Naive thymus-derived CD4-positive, alpha-beta T cell (primary cell): ENCODE measurements at regions of chr20 and their contacts with region 1.

Region 1: GRCh38 chr20:32945710-32946221 is 58.5 kb downstream of the SUN5 start:
- DNase-seq: peak in 7 of 9 donors; percentile 22 to 67 (median 57)
- ATAC-seq: peak; percentile 93
- H3K4me3 ChIP-seq: peak overlapping the region; percentile 25
- H3K4me3 Mint-ChIP-seq: peak overlapping the region; percentile 34 to 85 (median 68)
- H3K27ac ChIP-seq: peak overlapping the region; percentile 57
- H3K27ac Mint-ChIP-seq: peak overlapping the region; percentile 79 to 96 (median 88)
- H3K4me1 ChIP-seq: peaks cover 8 to 33% of the 10 kb centered on the region in 2 donors
- H3K4me1 Mint-ChIP-seq: peaks cover 30 to 53% (median 48%) of the 10 kb centered on the region in 7 donors
- H3K27me3 ChIP-seq: no peaks in the 10 kb centered on the region
- H3K27me3 Mint-ChIP-seq: no peaks in the 10 kb centered on the region

Region 2: DNA sequence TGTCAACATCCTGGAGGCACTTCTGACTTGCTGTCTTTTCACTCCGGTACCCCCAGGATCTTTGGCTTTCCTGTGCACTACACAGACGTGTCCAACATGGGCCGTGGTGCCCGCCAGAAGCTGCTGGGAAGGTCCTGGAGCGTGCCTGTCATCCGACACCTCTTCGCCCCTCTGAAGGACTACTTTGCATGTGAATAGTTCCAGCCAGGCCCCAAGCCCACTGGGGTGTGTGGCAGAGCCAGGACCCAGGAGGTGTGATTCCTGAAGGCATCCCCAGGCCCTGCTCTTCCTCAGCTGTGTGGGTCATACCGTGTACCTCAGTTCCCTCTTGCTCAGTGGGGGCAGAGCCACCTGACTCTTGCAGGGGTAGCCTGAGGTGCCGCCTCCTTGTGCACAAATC is 138.1 kb before region 1 on chr20:
- CTCF ChIA-PET with region 1: no interaction called
- POLR2A ChIA-PET with region 1: no interaction called
- intact Hi-C with region 1: no loop called
- DNase-seq: no peak
- ATAC-seq: no peak
- H3K4me3 ChIP-seq: no peak overlapping the region
- H3K4me3 Mint-ChIP-seq: no peak overlapping the region
- H3K27ac ChIP-seq: no peak overlapping the region
- H3K27ac Mint-ChIP-seq: peak overlapping the region in 1 of 9 donors; percentile 17
- H3K4me1 ChIP-seq: no peaks in the 10 kb centered on the region
- H3K4me1 Mint-ChIP-seq: no peaks in the 10 kb centered on the region
- H3K27me3 ChIP-seq: no peaks in the 10 kb centered on the region
- H3K27me3 Mint-ChIP-seq: no peaks in the 10 kb centered on the region

Region 3: DNA sequence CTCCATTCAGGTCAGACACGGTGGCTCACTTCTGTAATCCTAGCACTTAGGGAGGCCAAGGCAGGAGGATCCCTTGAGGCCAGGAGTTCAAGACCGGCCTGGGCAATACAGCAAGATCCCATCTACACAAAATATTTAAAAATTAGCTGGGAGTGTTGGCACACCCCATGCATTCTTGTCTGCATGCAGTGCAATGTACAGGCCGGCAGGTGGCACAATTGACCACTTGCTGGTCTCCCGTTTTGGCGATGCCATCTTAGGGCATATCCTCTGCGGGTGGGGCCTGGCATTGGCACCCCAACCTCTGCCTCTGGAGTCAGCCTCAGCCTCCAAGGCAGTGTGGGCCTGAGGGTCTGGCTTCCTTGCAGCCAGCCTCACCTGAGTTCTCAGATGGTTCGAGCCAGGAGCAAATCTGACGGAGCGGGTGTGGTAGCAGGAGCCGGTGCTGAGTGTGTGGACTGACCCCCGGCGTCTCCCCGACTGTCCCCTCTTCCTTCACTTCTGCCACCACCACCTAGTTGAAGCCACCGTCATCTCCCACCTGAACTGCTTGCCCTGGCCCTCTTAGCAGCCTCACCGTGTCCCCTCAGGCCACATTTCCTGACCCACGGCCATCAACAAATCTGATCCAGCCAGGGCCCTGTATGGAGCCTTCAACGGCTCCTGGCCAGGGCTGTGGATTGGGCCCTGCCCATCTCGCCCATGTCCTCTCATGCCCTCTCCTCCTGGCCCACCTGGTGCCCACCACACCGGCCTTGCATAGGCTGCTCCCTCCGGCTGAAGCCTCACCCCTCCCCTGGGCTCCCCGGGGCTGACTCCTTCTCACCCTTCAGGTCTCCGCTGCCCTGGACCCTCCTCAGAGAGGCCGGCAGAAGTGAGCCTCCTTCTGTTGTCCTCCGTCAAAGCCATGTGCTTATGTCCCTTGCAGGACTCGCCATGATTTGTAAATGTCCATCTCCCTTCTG is 43.0 kb before region 1 on chr20:
- CTCF ChIA-PET with region 1: interaction called, 11 read pairs
- POLR2A ChIA-PET with region 1: no interaction called
- intact Hi-C with region 1: loop called (anchors 1 kb)
- DNase-seq: peak; percentile 42 to 76 (median 65)
- ATAC-seq: peak; percentile 89
- H3K4me3 ChIP-seq: no peak overlapping the region
- H3K4me3 Mint-ChIP-seq: peak overlapping the region in 6 of 10 donors; percentile 23 to 68 (median 46)
- H3K27ac ChIP-seq: no peak overlapping the region
- H3K27ac Mint-ChIP-seq: peak overlapping the region in 7 of 9 donors; percentile 43 to 86 (median 75)
- H3K4me1 ChIP-seq: peaks cover 0 to 34% of the 10 kb centered on the region in 2 donors
- H3K4me1 Mint-ChIP-seq: peaks cover 12 to 56% (median 37%) of the 10 kb centered on the region in 7 donors
- H3K27me3 ChIP-seq: no peaks in the 10 kb centered on the region
- H3K27me3 Mint-ChIP-seq: no peaks in the 10 kb centered on the region

Region 4: DNA sequence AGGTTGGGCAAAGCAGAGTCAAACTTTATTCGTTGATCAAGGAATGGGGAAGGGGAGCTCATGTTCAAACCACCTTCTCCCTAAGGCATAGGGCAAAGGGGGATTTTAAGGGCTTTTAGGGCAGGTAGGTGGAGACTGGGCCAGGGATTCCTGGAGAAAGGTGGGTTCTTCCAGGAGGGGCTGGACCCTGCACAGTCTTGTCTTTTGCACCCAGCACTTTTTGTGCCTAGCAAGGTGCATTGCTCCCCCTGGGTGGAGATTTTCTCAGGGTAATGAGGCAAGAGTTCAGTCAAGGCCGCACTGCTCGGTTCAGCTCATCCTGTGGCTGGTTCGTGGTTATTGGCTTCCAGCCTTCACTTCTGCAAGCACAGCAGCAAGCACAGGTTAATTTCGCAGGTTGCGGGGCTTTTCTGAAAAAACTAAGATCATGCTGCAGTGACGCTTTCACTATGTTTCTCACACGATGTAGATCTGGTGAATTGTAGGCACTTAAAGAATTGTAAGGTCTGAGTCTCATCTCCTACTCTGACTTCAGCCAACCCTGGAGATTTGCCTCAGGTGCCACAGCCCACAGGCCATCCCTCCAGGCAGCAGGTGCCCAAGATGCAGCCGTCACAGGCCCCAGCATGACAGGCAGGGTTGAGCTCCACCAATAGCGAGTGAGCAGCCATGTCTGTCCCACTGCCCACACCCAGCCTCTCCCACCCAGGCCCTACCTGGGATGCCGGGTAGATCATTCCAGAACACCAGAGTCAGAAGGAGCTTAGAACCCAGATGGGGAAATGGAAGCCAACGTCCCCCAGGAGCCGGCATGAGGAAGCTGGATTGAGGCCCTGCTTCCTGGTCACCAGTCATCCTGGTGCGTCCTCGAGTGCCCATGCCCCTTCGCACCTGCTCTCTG is 21.4 kb after region 1 on chr20:
- CTCF ChIA-PET with region 1: interaction called, 25 read pairs
- POLR2A ChIA-PET with region 1: interaction called, 40 read pairs
- intact Hi-C with region 1: loop called in 1 of 2 experiments (anchors 1 kb)
- DNase-seq: peak in 7 of 9 donors; percentile 58 to 81 (median 73)
- ATAC-seq: peak; percentile 68
- H3K4me3 ChIP-seq: peak overlapping the region; percentile 46
- H3K4me3 Mint-ChIP-seq: peak overlapping the region in 7 of 10 donors; percentile 50 to 82 (median 74)
- H3K27ac ChIP-seq: peak overlapping the region; percentile 85
- H3K27ac Mint-ChIP-seq: peak overlapping the region in 3 of 9 donors; percentile 90 to 98 (median 94)
- H3K4me1 ChIP-seq: peaks cover 72 to 86% of the 10 kb centered on the region in 2 donors
- H3K4me1 Mint-ChIP-seq: peaks cover 20 to 87% (median 64%) of the 10 kb centered on the region in 7 donors
- H3K27me3 ChIP-seq: no peaks in the 10 kb centered on the region
- H3K27me3 Mint-ChIP-seq: no peaks in the 10 kb centered on the region

Region 5: DNA sequence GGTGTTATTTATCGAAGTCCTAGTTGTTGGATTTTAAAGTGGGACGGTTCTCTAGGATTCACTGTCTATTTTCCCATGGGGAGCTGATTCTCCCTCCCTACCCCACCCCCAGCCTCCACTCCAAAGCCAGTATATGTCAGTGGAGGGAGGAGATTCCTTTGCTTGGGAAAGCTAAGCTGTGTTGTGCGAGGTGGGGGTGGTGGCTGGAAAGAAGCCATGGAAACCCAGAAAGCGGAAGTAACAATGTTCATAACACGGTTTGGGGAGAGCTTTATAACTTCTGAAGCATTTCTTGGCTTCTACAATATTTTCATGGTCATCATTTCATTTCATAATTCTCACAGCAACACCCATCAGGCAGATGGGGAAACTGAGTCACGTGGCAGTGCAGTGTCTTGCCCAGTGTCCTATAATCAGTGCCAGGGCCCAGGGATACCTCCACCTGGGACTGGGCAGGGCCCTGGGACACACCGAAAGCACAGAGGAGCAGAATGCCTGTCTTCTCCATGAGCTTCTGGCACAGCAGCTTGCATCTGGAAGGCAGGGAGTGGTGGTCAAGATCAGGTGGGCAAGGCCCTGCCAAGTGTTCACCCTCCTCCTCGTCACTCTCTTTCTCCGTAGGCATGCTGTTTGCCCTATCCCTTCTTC is 54.0 kb after region 1 on chr20:
- CTCF ChIA-PET with region 1: interaction called, 3 read pairs
- POLR2A ChIA-PET with region 1: interaction called, 3 read pairs
- intact Hi-C with region 1: loop called in 1 of 2 experiments (anchors 10 kb)
- DNase-seq: no peak
- ATAC-seq: no peak
- H3K4me3 ChIP-seq: no peak overlapping the region
- H3K4me3 Mint-ChIP-seq: peak overlapping the region in 4 of 10 donors; percentile 10 to 39 (median 28)
- H3K27ac ChIP-seq: no peak overlapping the region
- H3K27ac Mint-ChIP-seq: peak overlapping the region in 6 of 9 donors; percentile 5 to 56 (median 35)
- H3K4me1 ChIP-seq: peaks cover 0 to 19% of the 10 kb centered on the region in 2 donors
- H3K4me1 Mint-ChIP-seq: peaks cover 9 to 64% (median 54%) of the 10 kb centered on the region in 7 donors
- H3K27me3 ChIP-seq: no peaks in the 10 kb centered on the region
- H3K27me3 Mint-ChIP-seq: no peaks in the 10 kb centered on the region

Region 6: DNA sequence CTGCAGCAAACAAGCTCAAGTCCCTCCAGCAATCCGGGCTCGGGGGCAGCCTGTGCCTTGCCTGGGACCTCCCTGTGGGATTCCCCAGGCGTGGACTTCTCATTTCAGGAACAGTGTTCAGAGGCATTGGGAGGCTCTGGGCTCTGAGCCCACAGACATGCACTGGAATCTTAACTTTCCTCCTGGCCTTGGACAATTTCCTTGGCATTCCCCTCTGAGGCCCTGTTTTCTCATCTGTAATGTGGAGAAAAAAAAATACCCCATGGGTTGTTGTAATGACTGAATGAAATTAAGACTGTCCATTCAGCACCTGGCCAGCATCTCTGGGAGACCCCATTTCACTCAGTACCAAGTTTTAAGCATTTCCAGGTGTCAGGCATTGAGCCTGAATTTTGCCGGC is 151.2 kb after region 1 on chr20:
- CTCF ChIA-PET with region 1: interaction called, 6 read pairs
- POLR2A ChIA-PET with region 1: no interaction called
- intact Hi-C with region 1: loop called in 1 of 2 experiments (anchors 1 kb)
- DNase-seq: no peak
- ATAC-seq: no peak
- H3K4me3 ChIP-seq: no peak overlapping the region
- H3K4me3 Mint-ChIP-seq: no peak overlapping the region
- H3K27ac ChIP-seq: no peak overlapping the region
- H3K27ac Mint-ChIP-seq: no peak overlapping the region
- H3K4me1 ChIP-seq: peaks cover 0 to 8% of the 10 kb centered on the region in 2 donors
- H3K4me1 Mint-ChIP-seq: peaks cover 0 to 12% (median 5%) of the 10 kb centered on the region in 7 donors
- H3K27me3 ChIP-seq: no peaks in the 10 kb centered on the region
- H3K27me3 Mint-ChIP-seq: peaks cover 0 to 4% (median 0%) of the 10 kb centered on the region in 5 donors

Region 7: GRCh38 chr20:33322456-33322855 is 376.7 kb after region 1 on chr20:
- CTCF ChIA-PET with region 1: no interaction called
- POLR2A ChIA-PET with region 1: no interaction called
- intact Hi-C with region 1: no loop called
- DNase-seq: no peak
- ATAC-seq: no peak
- H3K4me3 ChIP-seq: no peak overlapping the region
- H3K4me3 Mint-ChIP-seq: no peak overlapping the region
- H3K27ac ChIP-seq: no peak overlapping the region
- H3K27ac Mint-ChIP-seq: no peak overlapping the region
- H3K4me1 ChIP-seq: no peaks in the 10 kb centered on the region
- H3K4me1 Mint-ChIP-seq: no peaks in the 10 kb centered on the region
- H3K27me3 ChIP-seq: no peaks in the 10 kb centered on the region
- H3K27me3 Mint-ChIP-seq: peaks cover 0 to 17% (median 3%) of the 10 kb centered on the region in 5 donors